Activated CD4-positive, alpha-beta memory T cell treated with anti-CD3 and anti-CD28 coated beads for 36 hours (primary cell): ENCODE measurements at regions of chr15 and their contacts with region 1.

Region 1: GRCh38 chr15:78034495-78035191 is 42.9 kb downstream of the TBC1D2B start:
- DNase-seq: peak; percentile 94
- H3K4me3 Mint-ChIP-seq: peak overlapping the region; percentile 43
- H3K27ac Mint-ChIP-seq: peak overlapping the region; percentile 73
- H3K4me1 Mint-ChIP-seq: peaks cover 85% of the 10 kb centered on the region
- H3K27me3 Mint-ChIP-seq: no peaks in the 10 kb centered on the region

Region 2: GRCh38 chr15:77966540-77967290 is 67.9 kb before region 1 on chr15:
- CTCF ChIA-PET with region 1: interaction called, 10 read pairs
- POLR2A ChIA-PET with region 1: no interaction called
- intact Hi-C with region 1: no loop called
- DNase-seq: peak; percentile 67
- H3K4me3 Mint-ChIP-seq: no peak overlapping the region
- H3K27ac Mint-ChIP-seq: no peak overlapping the region
- H3K4me1 Mint-ChIP-seq: no peaks in the 10 kb centered on the region
- H3K27me3 Mint-ChIP-seq: peaks cover 3% of the 10 kb centered on the region

Region 3: DNA sequence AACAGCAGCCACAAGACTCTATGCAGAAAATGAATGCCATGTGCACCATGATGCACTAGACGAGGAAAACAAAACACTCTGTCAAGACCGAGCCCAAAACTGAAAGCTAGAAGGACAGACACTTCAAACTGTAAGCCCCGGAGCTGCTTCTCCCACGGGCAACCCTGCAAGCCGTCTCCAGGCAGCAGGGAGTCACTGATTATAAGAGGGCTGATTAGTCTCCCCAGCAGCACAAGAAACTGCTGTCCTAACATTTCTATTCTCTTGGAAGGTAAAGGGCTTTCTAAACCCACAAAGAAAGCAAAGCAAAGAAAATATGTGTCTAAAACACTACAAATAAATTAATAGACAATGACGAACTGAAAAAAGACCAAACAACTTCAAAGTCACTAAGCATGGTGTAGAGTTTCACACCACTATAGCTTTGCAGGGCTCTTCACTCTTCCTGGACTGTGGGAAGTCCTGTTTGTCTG is 27.4 kb after region 1 on chr15:
- CTCF ChIA-PET with region 1: interaction called, 12 read pairs
- POLR2A ChIA-PET with region 1: interaction called, 39 read pairs
- intact Hi-C with region 1: no loop called
- DNase-seq: peak; percentile 61
- H3K4me3 Mint-ChIP-seq: peak overlapping the region; percentile 50
- H3K27ac Mint-ChIP-seq: peak overlapping the region; percentile 69
- H3K4me1 Mint-ChIP-seq: peaks cover 41% of the 10 kb centered on the region
- H3K27me3 Mint-ChIP-seq: no peaks in the 10 kb centered on the region

Region 4: GRCh38 chr15:78077058-78077877 is 42.6 kb after region 1 on chr15 and contains the start of gene TBC1D2B:
- CTCF ChIA-PET with region 1: interaction called, 26 read pairs
- POLR2A ChIA-PET with region 1: interaction called, 9 read pairs
- intact Hi-C with region 1: loop called (anchors 1 kb)
- DNase-seq: peak; percentile 79
- H3K4me3 Mint-ChIP-seq: peak within 1 kb of the TSS; percentile 91
- H3K27ac Mint-ChIP-seq: peak within 1 kb of the TSS; percentile 82
- H3K4me1 Mint-ChIP-seq: peaks cover 51% of the 10 kb centered on the region
- H3K27me3 Mint-ChIP-seq: no peaks in the 10 kb centered on the region
- total RNA-seq, gene TBC1D2B: 47.9 to 57.8 TPM